ENCODE measurements at regions of chr3 and their contacts with region 1.

Region 1: GRCh38 chr3:132180337-132180791 is 136.8 kb upstream of the ACP3 start:
- DNase-seq: peak; percentile 60
- H3K4me3 ChIP-seq: no peak overlapping the region
- CTCF ChIP-seq: peak; percentile 58

Region 2: DNA sequence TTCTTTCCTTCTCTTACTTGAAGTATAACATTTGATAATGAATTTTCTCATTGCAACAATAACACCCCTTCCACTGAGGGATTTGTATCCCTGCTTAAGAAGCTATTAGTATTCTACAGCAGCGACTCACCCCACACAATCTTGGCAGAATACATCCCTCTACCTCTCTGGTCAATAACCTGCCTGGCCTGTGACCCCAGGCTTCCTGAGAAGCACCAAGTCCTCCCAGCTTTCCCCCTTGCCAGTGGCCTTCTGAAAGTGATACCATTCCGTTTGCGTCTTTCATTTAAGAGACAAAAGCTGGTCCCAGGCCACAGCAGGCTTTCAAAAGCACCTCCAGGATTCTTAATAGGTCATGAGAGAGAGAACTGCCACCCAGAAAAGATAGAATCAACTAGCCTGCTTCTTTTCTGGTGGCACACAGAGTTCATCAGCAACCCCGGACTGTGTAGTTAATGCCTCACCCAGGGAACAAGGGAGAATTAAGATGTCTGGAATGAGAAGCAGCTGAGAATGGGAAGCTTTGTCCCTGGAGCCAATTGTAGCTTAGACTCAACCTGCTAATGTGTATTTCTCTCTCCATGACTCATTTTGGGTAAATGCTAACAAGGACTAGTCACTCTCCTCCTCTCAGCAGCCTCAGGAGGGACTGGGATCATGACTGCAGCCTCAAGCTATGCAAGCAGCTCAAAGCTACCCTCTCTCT is 44.6 kb before region 1 on chr3:
- in situ Hi-C with region 1: loop called (anchors 5 kb)
- DNase-seq: peak; percentile 88
- H3K4me3 ChIP-seq: peak overlapping the region; percentile 23
- CTCF ChIP-seq: no peak

Measured in astrocyte of the cerebellum (primary cell).